ENCODE measurements at regions of chr7 and their contacts with region 1.

Region 1: GRCh38 chr7:128399991-128400390 is 9.8 kb downstream of the IMPDH1 start:
- DNase-seq: no peak
- H3K4me3 ChIP-seq: no peak overlapping the region
- CTCF ChIP-seq: no peak
- POLR2A ChIP-seq: no peak

Region 2: DNA sequence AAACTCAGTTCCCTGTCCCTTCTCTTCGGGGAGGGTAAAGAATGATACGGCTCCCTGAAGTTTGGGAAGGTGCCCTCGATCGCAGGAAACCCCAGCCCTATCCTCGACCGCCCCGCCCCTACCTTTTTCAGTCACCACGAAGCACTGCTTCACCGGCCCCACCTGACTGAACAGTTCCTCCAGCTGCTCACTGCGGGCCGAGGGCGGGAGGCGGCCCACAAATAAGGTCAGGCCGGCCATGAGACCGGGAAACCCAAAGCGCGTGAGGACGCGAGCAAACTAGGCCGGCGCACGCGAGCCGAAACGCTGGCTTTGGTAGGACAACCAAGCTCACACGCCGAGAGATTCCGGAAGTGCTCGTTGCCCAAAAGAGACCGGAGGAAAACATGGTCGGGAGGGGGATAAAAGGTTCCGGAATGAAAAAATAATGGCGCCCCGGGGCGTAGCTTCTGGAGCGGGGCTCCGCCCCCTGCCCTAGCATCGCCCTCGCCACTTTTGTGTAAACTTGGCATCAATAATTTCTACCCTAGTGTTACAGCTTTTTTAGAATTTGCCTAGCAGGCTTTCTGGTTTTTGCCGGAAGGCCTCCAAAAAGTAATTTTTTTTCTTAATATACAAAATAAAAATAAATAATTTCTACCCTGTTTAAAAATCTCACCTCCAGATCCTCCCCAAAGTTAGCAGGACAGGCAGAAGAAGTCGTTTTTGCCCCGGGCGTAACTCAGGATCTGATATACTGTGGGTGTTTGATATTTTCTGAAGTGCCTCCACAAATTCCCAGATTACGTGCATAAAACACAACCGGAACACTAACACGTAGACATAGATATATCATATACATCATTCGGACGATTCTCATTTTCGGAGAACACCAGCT is 56.2 kb before region 1 on chr7 and contains the start of gene RBM28:
- intact Hi-C with region 1: no loop called
- DNase-seq: peak; percentile 87 to 96
- H3K4me3 ChIP-seq: peak within 1 kb of the TSS; percentile 85
- CTCF ChIP-seq: no peak
- POLR2A ChIP-seq: no peak
- total RNA-seq, gene RBM28: 15.4 to 42.7 (median 19.1) TPM

Region 3: GRCh38 chr7:128417071-128417470 is 17.1 kb after region 1 on chr7:
- intact Hi-C with region 1: loop called (anchors 2 kb)
- DNase-seq: no peak
- H3K4me3 ChIP-seq: no peak overlapping the region
- CTCF ChIP-seq: no peak
- POLR2A ChIP-seq: no peak

Measured in lower leg skin (tissue), 4 donors.